ENCODE measurements at regions of chr19 and their contacts with region 1.

Region 1: GRCh38 chr19:19053508-19054314 is 10.1 kb upstream of the SLC25A42 start:
- DNase-seq: peak; percentile 79
- H3K4me3 ChIP-seq: no peak overlapping the region
- H3K27ac ChIP-seq: no peak overlapping the region
- H3K4me1 ChIP-seq: no peaks in the 10 kb centered on the region
- H3K27me3 ChIP-seq: no peaks in the 10 kb centered on the region
- CTCF ChIP-seq: peak; percentile 12 to 58 (median 42)
- EP300 ChIP-seq: no peak
- POLR2A ChIP-seq: no peak

Region 2: DNA sequence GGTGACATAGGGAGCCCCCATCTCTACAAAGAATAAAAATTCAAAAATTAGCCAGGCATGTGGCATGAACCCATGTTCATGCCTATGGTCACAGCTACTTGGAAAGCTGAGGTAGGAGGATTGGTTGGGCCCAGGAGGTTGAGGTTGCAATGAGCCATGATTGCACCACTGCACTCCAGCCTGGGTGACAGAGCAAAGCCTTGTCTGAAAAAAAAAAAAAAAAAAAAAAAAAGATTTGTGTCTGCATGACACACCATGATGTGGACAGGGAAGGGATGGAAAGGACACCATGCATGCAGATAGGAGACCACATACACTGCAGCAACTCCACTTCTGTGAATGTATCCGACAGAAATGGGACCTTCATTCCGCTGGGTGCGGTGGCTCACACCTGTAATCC is 78.7 kb before region 1 on chr19:
- intact Hi-C with region 1: no loop called
- DNase-seq: no peak
- H3K4me3 ChIP-seq: no peak overlapping the region
- H3K27ac ChIP-seq: no peak overlapping the region
- H3K4me1 ChIP-seq: peaks cover 0 to 6% (median 0%) of the 10 kb centered on the region in 4 donors
- H3K27me3 ChIP-seq: no peaks in the 10 kb centered on the region
- CTCF ChIP-seq: no peak
- EP300 ChIP-seq: no peak
- POLR2A ChIP-seq: no peak

Region 3: GRCh38 chr19:19170053-19170872 is 116.6 kb after region 1 on chr19 and contains the start of gene MEF2B:
- intact Hi-C with region 1: loop called (anchors 2 kb)
- DNase-seq: no peak
- H3K4me3 ChIP-seq: peak within 1 kb of the TSS in 2 of 4 donors; percentile 22 to 23
- H3K27ac ChIP-seq: no peak within 1 kb of the TSS
- H3K4me1 ChIP-seq: peaks cover 0 to 11% (median 10%) of the 10 kb centered on the region in 4 donors
- H3K27me3 ChIP-seq: peaks cover 0 to 23% (median 13%) of the 10 kb centered on the region in 3 donors
- CTCF ChIP-seq: no peak
- EP300 ChIP-seq: no peak
- POLR2A ChIP-seq: no peak
- total RNA-seq, gene MEF2B: not detected

Region 4: GRCh38 chr19:19261350-19262189 is 207.9 kb after region 1 on chr19:
- intact Hi-C with region 1: no loop called
- DNase-seq: no peak
- H3K4me3 ChIP-seq: peak overlapping the region in 3 of 4 donors; percentile 14 to 23 (median 16)
- H3K27ac ChIP-seq: no peak overlapping the region
- H3K4me1 ChIP-seq: peaks cover 0 to 11% (median 8%) of the 10 kb centered on the region in 4 donors
- H3K27me3 ChIP-seq: peaks cover 14 to 58% (median 32%) of the 10 kb centered on the region in 3 donors
- CTCF ChIP-seq: no peak
- EP300 ChIP-seq: no peak
- POLR2A ChIP-seq: no peak